SK-N-SH (cell line): ENCODE measurements at regions of chr20 and their contacts with region 1.

Region 1: GRCh38 chr20:2172305-2173175 is 70.9 kb downstream of the STK35 start:
- DNase-seq: peak; percentile 82
- H3K4me3 ChIP-seq: no peak overlapping the region; a peak in 1 of 4 replicates
- H3K27ac ChIP-seq: no peak overlapping the region
- H3K4me1 ChIP-seq: peaks cover 0 to 2% of the 10 kb centered on the region in 2 experiments; a peak in 1 of 4 replicates
- H3K27me3 ChIP-seq: peaks cover 9% of the 10 kb centered on the region
- CTCF ChIP-seq: peak; percentile 92
- EP300 ChIP-seq: no peak
- RAD21 ChIP-seq: peak; percentile 94

Region 2: GRCh38 chr20:1802385-1803060 is 370.0 kb before region 1 on chr20:
- CTCF ChIA-PET with region 1: interaction called, 50 read pairs
- POLR2A ChIA-PET with region 1: interaction called, 3 read pairs
- DNase-seq: peak; percentile 87
- H3K4me3 ChIP-seq: peak overlapping the region; percentile 43 to 55
- H3K27ac ChIP-seq: no peak overlapping the region
- H3K4me1 ChIP-seq: peaks cover 7 to 10% of the 10 kb centered on the region in 2 experiments; a peak in 2 of 4 replicates
- H3K27me3 ChIP-seq: no peaks in the 10 kb centered on the region
- CTCF ChIP-seq: peak; percentile 74
- EP300 ChIP-seq: no peak
- RAD21 ChIP-seq: peak; percentile 77

Region 3: DNA sequence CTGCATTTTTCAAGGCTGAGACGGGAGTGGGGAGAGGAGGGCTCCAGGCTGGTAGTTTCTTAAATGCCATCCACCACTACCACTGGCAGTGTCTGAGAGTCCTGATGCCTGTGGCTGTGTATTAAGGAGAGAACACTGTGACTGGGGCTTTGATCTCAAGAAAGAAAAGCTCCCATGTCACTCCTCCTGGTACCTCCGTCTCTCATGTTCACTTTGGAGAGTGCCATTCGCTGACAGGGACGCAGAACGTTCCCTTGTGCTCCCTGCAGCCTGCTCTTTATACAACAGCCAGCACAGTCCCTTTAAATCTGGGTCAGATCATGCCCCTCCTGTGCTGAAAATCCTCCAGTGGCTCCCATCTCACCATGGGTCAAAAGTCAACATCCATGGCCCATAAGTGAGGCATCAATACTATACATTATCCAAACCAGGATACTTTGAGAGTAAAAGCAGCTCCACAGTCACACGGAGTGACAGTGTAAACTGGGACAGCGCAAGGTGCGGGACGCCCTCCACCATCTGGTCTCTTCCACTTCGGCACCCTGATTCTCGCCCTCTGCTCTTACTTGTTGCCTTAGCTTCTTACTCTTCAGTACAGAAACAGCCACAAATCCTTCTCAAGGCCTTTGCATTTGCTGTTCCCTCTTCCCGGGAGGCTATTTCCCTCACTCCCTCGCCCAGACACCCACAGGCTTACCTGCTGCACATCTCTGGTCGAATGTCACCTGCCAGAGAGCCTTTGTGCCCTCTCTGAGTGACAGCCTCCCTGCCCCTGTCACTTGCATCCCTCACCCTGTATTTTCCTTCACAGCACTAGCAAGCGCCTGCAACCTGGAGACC is 198.7 kb before region 1 on chr20:
- CTCF ChIA-PET with region 1: interaction called, 13 read pairs
- POLR2A ChIA-PET with region 1: no interaction called
- DNase-seq: no peak
- H3K4me3 ChIP-seq: no peak overlapping the region
- H3K27ac ChIP-seq: no peak overlapping the region
- H3K4me1 ChIP-seq: no peaks in the 10 kb centered on the region
- H3K27me3 ChIP-seq: peaks cover 23% of the 10 kb centered on the region; the same call in 1 of the 2 replicates
- CTCF ChIP-seq: no peak
- EP300 ChIP-seq: no peak
- RAD21 ChIP-seq: no peak

Region 4: DNA sequence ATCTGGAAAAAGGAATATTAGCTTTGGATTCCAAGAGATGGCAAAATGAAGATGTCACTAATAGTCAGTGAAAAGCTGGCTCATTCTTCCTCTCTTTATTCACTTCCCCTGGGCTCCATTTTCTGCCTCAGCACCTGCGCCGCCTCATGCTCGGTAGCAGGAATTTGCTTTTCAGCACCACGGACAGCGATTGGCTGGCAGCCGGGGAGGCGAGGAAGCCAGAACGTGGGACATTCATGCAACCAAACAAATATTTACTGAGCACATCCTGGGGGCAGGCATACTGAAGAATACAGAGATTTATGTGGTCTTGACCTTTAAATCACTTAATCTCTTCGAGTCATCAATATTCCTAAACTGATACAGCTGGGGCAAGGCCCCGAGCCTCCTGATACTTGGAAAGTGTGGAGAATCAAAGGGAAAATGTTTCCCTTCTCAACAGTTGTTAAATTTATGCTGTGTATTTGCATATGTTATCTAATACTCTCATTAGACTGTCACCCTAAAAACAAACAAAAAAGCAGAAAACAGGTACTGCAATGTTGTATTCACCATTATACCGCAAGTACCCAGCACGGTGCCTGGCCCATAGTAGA is 166.6 kb before region 1 on chr20:
- CTCF ChIA-PET with region 1: interaction called, 130 read pairs
- POLR2A ChIA-PET with region 1: no interaction called
- DNase-seq: no peak
- H3K4me3 ChIP-seq: no peak overlapping the region
- H3K27ac ChIP-seq: no peak overlapping the region
- H3K4me1 ChIP-seq: no peaks in the 10 kb centered on the region
- H3K27me3 ChIP-seq: no peaks in the 10 kb centered on the region; the same call in 1 of the 2 replicates
- CTCF ChIP-seq: no peak
- EP300 ChIP-seq: no peak
- RAD21 ChIP-seq: no peak

Region 5: GRCh38 chr20:2101865-2102584 is 70.5 kb before region 1 on chr20:
- CTCF ChIA-PET with region 1: interaction called, 19 read pairs
- POLR2A ChIA-PET with region 1: interaction called, 3 read pairs
- DNase-seq: peak; percentile 93
- H3K4me3 ChIP-seq: peak overlapping the region; percentile 87 to 91
- H3K27ac ChIP-seq: peak overlapping the region; percentile 99 to 100
- H3K4me1 ChIP-seq: peaks cover 8 to 19% of the 10 kb centered on the region in 2 experiments; a peak in 3 of 4 replicates
- H3K27me3 ChIP-seq: no peaks in the 10 kb centered on the region
- CTCF ChIP-seq: no peak
- EP300 ChIP-seq: peak in 1 of 2 experiments; percentile 40; a peak in 1 of 4 replicates
- RAD21 ChIP-seq: no peak

Region 6: DNA sequence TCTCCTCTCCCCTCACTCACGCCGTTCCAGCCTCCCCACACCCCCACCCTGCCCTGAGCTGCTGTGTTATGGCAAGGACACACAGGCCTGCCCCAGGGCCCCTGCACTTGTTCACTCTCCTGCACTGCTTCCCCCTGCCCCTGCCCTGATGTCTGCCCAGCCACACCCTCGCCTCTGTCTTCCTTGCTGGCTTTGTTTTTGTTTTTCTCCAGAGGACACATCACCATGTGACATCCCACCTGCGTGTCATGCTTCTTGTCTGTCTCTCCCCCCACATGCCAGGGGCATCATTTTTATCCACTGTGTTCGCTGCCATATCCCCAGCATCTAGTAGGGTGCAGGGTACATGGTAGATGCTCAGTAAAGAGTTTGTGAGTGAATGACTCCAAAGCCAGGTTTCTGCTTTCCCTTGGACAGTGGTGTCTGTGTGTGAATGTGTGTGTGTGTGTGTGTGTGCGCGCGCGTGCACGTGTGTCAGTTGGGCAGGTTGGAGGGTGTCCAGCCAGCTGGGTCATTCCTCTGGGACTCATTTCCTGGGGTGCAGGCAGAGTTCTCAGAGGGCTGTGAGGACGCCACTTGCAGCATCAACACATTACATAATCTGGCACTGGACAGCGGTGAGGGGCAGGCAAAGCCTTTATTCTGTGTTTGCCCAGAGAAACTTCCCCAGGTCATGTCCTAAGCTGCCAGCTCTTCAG is 10.3 kb before region 1 on chr20:
- CTCF ChIA-PET with region 1: interaction called, 46 read pairs
- POLR2A ChIA-PET with region 1: no interaction called
- DNase-seq: no peak
- H3K4me3 ChIP-seq: no peak overlapping the region
- H3K27ac ChIP-seq: no peak overlapping the region
- H3K4me1 ChIP-seq: no peaks in the 10 kb centered on the region
- H3K27me3 ChIP-seq: no peaks in the 10 kb centered on the region
- CTCF ChIP-seq: no peak
- EP300 ChIP-seq: no peak
- RAD21 ChIP-seq: no peak

Region 7: GRCh38 chr20:2206957-2207769 is 34.6 kb after region 1 on chr20:
- CTCF ChIA-PET with region 1: interaction called, 25 read pairs
- POLR2A ChIA-PET with region 1: no interaction called
- DNase-seq: peak; percentile 93
- H3K4me3 ChIP-seq: peak overlapping the region; percentile 48 to 66
- H3K27ac ChIP-seq: no peak overlapping the region
- H3K4me1 ChIP-seq: peaks cover 0 to 5% of the 10 kb centered on the region in 2 experiments; a peak in 1 of 4 replicates
- H3K27me3 ChIP-seq: peaks cover 6% of the 10 kb centered on the region; the same call in 1 of the 2 replicates
- CTCF ChIP-seq: peak; percentile 65
- EP300 ChIP-seq: no peak
- RAD21 ChIP-seq: peak; percentile 70